GM12878 (cell line): ENCODE measurements at regions of chr1 and their contacts with region 1.

Region 1: GRCh38 chr1:202571347-202572339 is 138.6 kb downstream of the SYT2 start:
- DNase-seq: no peak
- ATAC-seq: peak; percentile 82
- H3K4me3 ChIP-seq: no peak overlapping the region
- H3K27ac ChIP-seq: no peak overlapping the region
- H3K4me1 ChIP-seq: peaks cover 7% of the 10 kb centered on the region; the same call in 1 of the 2 replicates
- H3K27me3 ChIP-seq: no peaks in the 10 kb centered on the region
- CTCF ChIP-seq: peak; percentile 87 to 89 (median 88)
- EP300 ChIP-seq: no peak
- POLR2A ChIP-seq: no peak
- RAD21 ChIP-seq: peak; percentile 99

Region 2: GRCh38 chr1:202462342-202463076 is 109.1 kb before region 1 on chr1:
- CTCF ChIA-PET with region 1: interaction called, 8 read pairs
- POLR2A ChIA-PET with region 1: no interaction called
- RAD21 ChIA-PET with region 1: interaction called, 8 read pairs
- SMC1A ChIA-PET with region 1: interaction called, 7 read pairs
- in situ Hi-C with region 1: no loop called
- intact Hi-C with region 1: loop called (anchors 5 kb)
- DNase-seq: no peak
- ATAC-seq: no peak
- H3K4me3 ChIP-seq: no peak overlapping the region
- H3K27ac ChIP-seq: no peak overlapping the region
- H3K4me1 ChIP-seq: no peaks in the 10 kb centered on the region
- H3K27me3 ChIP-seq: no peaks in the 10 kb centered on the region
- CTCF ChIP-seq: no peak
- EP300 ChIP-seq: no peak
- POLR2A ChIP-seq: no peak
- RAD21 ChIP-seq: no peak

Region 3: DNA sequence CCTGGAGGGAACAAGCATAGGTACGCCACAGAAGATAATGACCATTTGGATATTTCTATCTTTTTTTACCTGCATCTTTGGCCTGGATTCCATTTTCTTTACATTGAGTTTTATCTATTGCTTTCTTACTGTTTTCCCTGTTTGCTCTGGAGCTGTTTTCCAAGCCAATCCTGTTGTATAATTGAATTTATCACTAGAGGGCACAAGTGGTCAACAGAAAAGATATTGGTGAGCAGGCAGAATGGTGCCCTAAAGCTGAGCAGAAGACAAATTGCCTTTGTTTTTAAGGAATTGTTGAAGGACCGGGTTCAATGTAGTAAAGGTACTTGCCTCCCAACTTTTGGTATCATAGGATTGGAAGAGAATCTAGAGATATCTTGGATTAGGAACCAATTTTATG is 70.4 kb before region 1 on chr1:
- CTCF ChIA-PET with region 1: interaction called, 189 read pairs
- POLR2A ChIA-PET with region 1: interaction called, 3 read pairs
- RAD21 ChIA-PET with region 1: interaction called, 20 read pairs
- SMC1A ChIA-PET with region 1: interaction called, 173 read pairs
- in situ Hi-C with region 1: no loop called
- intact Hi-C with region 1: loop called (anchors 1 kb)
- DNase-seq: no peak
- ATAC-seq: peak; percentile 76
- H3K4me3 ChIP-seq: no peak overlapping the region
- H3K27ac ChIP-seq: no peak overlapping the region
- H3K4me1 ChIP-seq: no peaks in the 10 kb centered on the region
- H3K27me3 ChIP-seq: no peaks in the 10 kb centered on the region
- CTCF ChIP-seq: peak; percentile 26 to 50 (median 34); a peak in 5 of 6 replicates
- EP300 ChIP-seq: no peak
- POLR2A ChIP-seq: no peak
- RAD21 ChIP-seq: peak; percentile 77

Region 4: GRCh38 chr1:202553560-202554038 is 18.0 kb before region 1 on chr1:
- CTCF ChIA-PET with region 1: interaction called, 3 read pairs
- POLR2A ChIA-PET with region 1: interaction called, 3 read pairs
- RAD21 ChIA-PET with region 1: interaction called, 4 read pairs
- SMC1A ChIA-PET with region 1: interaction called, 10 read pairs
- in situ Hi-C with region 1: no loop called
- intact Hi-C with region 1: no loop called
- DNase-seq: peak; percentile 37
- ATAC-seq: peak; percentile 91
- H3K4me3 ChIP-seq: no peak overlapping the region
- H3K27ac ChIP-seq: no peak overlapping the region
- H3K4me1 ChIP-seq: no peaks in the 10 kb centered on the region
- H3K27me3 ChIP-seq: no peaks in the 10 kb centered on the region
- CTCF ChIP-seq: no peak
- EP300 ChIP-seq: no peak
- POLR2A ChIP-seq: no peak
- RAD21 ChIP-seq: no peak

Region 5: GRCh38 chr1:202599677-202600431 is 28.2 kb after region 1 on chr1:
- CTCF ChIA-PET with region 1: interaction called, 8 read pairs
- POLR2A ChIA-PET with region 1: interaction called, 3 read pairs
- RAD21 ChIA-PET with region 1: interaction called, 12 read pairs
- SMC1A ChIA-PET with region 1: interaction called, 12 read pairs
- in situ Hi-C with region 1: no loop called
- intact Hi-C with region 1: no loop called
- DNase-seq: no peak
- ATAC-seq: peak; percentile 95
- H3K4me3 ChIP-seq: no peak overlapping the region
- H3K27ac ChIP-seq: no peak overlapping the region
- H3K4me1 ChIP-seq: peaks cover 3% of the 10 kb centered on the region
- H3K27me3 ChIP-seq: no peaks in the 10 kb centered on the region; a peak in 3 of 4 replicates
- CTCF ChIP-seq: peak; percentile 79 to 86 (median 81)
- EP300 ChIP-seq: no peak
- POLR2A ChIP-seq: no peak
- RAD21 ChIP-seq: peak; percentile 79

Region 6: DNA sequence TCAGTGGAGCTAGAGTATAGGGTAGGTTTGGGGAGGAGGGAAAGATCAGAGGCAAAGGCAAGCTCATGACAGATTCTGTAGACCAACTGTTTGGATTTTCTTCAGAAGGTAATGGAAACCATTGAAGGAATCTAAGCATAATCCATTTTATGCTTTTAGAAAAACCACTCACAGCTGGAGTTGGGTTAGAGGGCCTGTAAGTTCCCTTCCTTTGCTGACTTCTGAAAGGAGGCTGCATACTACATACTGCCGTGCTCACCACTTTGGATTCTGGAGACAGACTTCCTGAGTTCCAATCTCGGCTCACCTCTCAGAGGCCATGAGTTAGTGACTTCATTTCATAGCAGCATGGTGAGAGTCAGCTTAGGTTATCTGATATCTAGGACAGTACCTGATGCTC is 145.0 kb after region 1 on chr1:
- CTCF ChIA-PET with region 1: interaction called, 27 read pairs
- POLR2A ChIA-PET with region 1: no interaction called
- RAD21 ChIA-PET with region 1: interaction called, 12 read pairs
- SMC1A ChIA-PET with region 1: interaction called, 13 read pairs
- in situ Hi-C with region 1: no loop called
- intact Hi-C with region 1: loop called (anchors 10 kb)
- DNase-seq: no peak
- ATAC-seq: no peak
- H3K4me3 ChIP-seq: no peak overlapping the region
- H3K27ac ChIP-seq: no peak overlapping the region
- H3K4me1 ChIP-seq: no peaks in the 10 kb centered on the region
- H3K27me3 ChIP-seq: peaks cover under 1 to 13% of the 10 kb centered on the region in 2 experiments
- CTCF ChIP-seq: no peak
- EP300 ChIP-seq: no peak
- POLR2A ChIP-seq: no peak
- RAD21 ChIP-seq: no peak